B cell (primary cell): ENCODE measurements at regions of chr18 and their contacts with region 1.

Region 1: DNA sequence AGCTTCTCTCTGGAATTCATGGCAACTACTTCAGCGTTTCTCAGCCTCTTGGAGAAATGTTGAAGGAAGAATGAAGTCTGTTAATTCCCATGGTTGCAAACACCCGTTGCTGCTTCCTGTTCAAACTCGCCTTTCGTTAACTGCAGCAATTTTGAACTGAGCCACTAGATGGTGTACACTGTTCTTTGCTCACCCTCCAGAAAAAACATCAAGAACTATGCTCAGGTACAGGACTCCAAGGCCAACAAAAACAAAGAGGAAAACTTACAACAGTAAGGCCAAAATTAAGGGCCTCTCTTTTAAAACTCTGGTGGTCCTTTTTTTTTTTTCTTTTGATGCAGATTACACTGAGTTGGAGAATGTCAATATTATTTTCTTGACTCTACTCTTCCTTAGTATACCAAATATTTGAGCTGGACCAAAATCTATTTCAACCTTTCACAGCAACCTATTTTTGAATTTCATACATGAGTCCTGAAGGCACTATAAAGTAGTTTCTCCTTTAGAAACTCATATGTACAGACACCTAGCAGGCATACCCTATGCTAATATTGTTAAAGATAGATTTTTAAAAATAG is 58.2 kb downstream of the KLHL14 start:
- DNase-seq: peak; percentile 83
- ATAC-seq: peak; percentile 97
- H3K4me3 ChIP-seq: no peak overlapping the region
- H3K4me3 Mint-ChIP-seq: no peak overlapping the region
- H3K27ac ChIP-seq: peak overlapping the region in 1 of 2 donors; percentile 45
- H3K27ac Mint-ChIP-seq: peak overlapping the region; percentile 62
- H3K4me1 ChIP-seq: peaks cover 7 to 9% of the 10 kb centered on the region in 2 donors
- H3K4me1 Mint-ChIP-seq: peaks cover 10% of the 10 kb centered on the region
- H3K27me3 ChIP-seq: no peaks in the 10 kb centered on the region
- H3K27me3 Mint-ChIP-seq: no peaks in the 10 kb centered on the region
- CTCF ChIP-seq: peak; percentile 83

Region 2: GRCh38 chr18:32438173-32438572 is 276.5 kb before region 1 on chr18:
- CTCF ChIA-PET with region 1: no interaction called
- POLR2A ChIA-PET with region 1: no interaction called
- intact Hi-C with region 1: no loop called
- DNase-seq: no peak
- ATAC-seq: no peak
- H3K4me3 ChIP-seq: no peak overlapping the region
- H3K4me3 Mint-ChIP-seq: no peak overlapping the region
- H3K27ac ChIP-seq: no peak overlapping the region
- H3K27ac Mint-ChIP-seq: no peak overlapping the region
- H3K4me1 ChIP-seq: no peaks in the 10 kb centered on the region
- H3K4me1 Mint-ChIP-seq: no peaks in the 10 kb centered on the region
- H3K27me3 ChIP-seq: no peaks in the 10 kb centered on the region
- H3K27me3 Mint-ChIP-seq: peaks cover 20% of the 10 kb centered on the region
- CTCF ChIP-seq: no peak

Region 3: GRCh38 chr18:32730620-32731091 is 16.0 kb after region 1 on chr18:
- CTCF ChIA-PET with region 1: interaction called, 20 read pairs
- POLR2A ChIA-PET with region 1: no interaction called
- intact Hi-C with region 1: loop called (anchors 1 kb)
- DNase-seq: peak; percentile 71
- ATAC-seq: peak; percentile 87
- H3K4me3 ChIP-seq: peak overlapping the region in 3 of 5 experiments; percentile 34 to 51 (median 35)
- H3K4me3 Mint-ChIP-seq: peak overlapping the region; percentile 85
- H3K27ac ChIP-seq: peak overlapping the region; percentile 39 to 60
- H3K27ac Mint-ChIP-seq: peak overlapping the region; percentile 88
- H3K4me1 ChIP-seq: peaks cover 17 to 27% of the 10 kb centered on the region in 2 donors
- H3K4me1 Mint-ChIP-seq: peaks cover 39% of the 10 kb centered on the region
- H3K27me3 ChIP-seq: no peaks in the 10 kb centered on the region
- H3K27me3 Mint-ChIP-seq: no peaks in the 10 kb centered on the region
- CTCF ChIP-seq: no peak

Region 4: DNA sequence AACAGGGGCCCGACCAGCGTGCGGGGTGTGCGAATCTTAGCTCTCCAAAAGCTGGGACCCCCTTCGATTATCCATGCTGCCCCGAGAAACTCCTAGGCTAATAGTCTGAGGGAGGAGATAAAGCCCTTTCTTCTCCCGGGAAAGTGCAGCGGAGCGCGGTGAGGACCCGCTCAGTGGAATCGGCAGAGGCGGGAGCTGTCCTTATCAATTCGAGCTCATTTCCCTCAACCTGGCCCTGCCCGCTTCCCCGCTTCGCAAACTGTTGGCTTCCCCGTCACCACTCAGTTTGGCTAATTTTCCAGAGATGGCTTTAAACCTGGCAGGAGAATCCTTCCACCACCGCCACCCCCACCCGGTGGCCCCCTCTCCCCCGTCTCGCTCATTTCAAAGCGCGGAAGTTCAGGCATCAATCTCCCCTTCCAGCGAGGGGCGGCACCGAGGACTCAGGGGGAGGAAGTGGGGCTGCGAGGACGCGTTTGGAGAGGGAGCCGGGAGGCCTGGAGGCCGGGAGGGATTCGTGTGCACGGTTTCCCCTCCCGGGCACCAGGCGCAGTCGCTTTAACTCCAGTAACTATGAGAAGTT is 56.6 kb after region 1 on chr18:
- CTCF ChIA-PET with region 1: interaction called, 48 read pairs
- POLR2A ChIA-PET with region 1: interaction called, 5 read pairs
- intact Hi-C with region 1: loop called (anchors 2 kb)
- DNase-seq: peak; percentile 56
- ATAC-seq: peak; percentile 26
- H3K4me3 ChIP-seq: peak overlapping the region; percentile 65 to 93 (median 82)
- H3K4me3 Mint-ChIP-seq: peak overlapping the region; percentile 99
- H3K27ac ChIP-seq: peak overlapping the region; percentile 75
- H3K27ac Mint-ChIP-seq: peak overlapping the region; percentile 93
- H3K4me1 ChIP-seq: peaks cover 43 to 48% of the 10 kb centered on the region in 2 donors
- H3K4me1 Mint-ChIP-seq: peaks cover 53% of the 10 kb centered on the region
- H3K27me3 ChIP-seq: no peaks in the 10 kb centered on the region
- H3K27me3 Mint-ChIP-seq: no peaks in the 10 kb centered on the region
- CTCF ChIP-seq: no peak

Region 5: DNA sequence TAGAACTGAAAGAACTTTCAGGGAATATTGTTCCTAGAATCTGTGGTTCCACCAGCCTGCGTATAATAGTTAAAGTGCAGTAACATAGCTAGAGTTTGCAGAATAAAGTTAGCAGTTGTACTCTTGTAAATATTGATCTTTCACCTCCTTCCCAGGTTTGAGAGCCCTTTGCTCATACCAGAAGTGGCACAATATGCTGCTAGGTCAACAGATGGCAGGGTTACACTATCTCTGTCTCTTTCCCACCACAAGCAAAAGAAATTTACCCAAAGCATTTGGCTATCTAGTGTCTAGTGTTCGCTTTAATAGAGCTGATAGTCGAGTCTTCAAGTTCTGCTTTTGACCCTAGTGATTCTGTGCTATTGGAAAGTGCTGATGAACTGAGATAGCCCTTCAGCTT is 177.1 kb after region 1 on chr18:
- CTCF ChIA-PET with region 1: interaction called, 10 read pairs
- POLR2A ChIA-PET with region 1: no interaction called
- intact Hi-C with region 1: no loop called
- DNase-seq: no peak
- ATAC-seq: no peak
- H3K4me3 ChIP-seq: no peak overlapping the region
- H3K4me3 Mint-ChIP-seq: no peak overlapping the region
- H3K27ac ChIP-seq: no peak overlapping the region
- H3K27ac Mint-ChIP-seq: peak overlapping the region; percentile 47
- H3K4me1 ChIP-seq: peaks cover 13 to 19% of the 10 kb centered on the region in 2 donors
- H3K4me1 Mint-ChIP-seq: peaks cover 29% of the 10 kb centered on the region
- H3K27me3 ChIP-seq: no peaks in the 10 kb centered on the region
- H3K27me3 Mint-ChIP-seq: no peaks in the 10 kb centered on the region
- CTCF ChIP-seq: no peak

Region 6: DNA sequence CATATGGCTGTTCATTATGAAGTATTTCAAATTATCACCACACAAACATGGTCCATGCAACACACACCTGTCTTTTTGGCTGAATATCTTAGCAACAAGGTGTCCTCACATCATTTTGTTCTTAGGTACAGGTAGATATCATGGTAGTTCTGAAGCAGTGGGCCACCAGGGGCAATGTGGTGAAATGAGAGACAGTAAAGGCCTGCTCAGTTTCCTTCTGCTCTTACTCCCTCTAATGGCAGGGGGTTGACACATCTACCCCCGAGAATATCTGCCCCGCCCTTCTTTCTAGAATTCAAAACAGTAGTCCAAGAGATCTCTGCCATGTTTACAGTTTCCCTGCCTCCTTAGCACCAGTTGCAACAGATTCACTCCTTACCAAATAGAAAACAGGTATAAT is 205.1 kb after region 1 on chr18:
- CTCF ChIA-PET with region 1: interaction called, 69 read pairs
- POLR2A ChIA-PET with region 1: interaction called, 3 read pairs
- intact Hi-C with region 1: loop called (anchors 1 kb)
- DNase-seq: peak; percentile 87
- ATAC-seq: peak; percentile 99
- H3K4me3 ChIP-seq: no peak overlapping the region
- H3K4me3 Mint-ChIP-seq: peak overlapping the region; percentile 49
- H3K27ac ChIP-seq: peak overlapping the region in 1 of 2 donors; percentile 24
- H3K27ac Mint-ChIP-seq: no peak overlapping the region
- H3K4me1 ChIP-seq: peaks cover 43 to 52% of the 10 kb centered on the region in 2 donors
- H3K4me1 Mint-ChIP-seq: peaks cover 44% of the 10 kb centered on the region
- H3K27me3 ChIP-seq: no peaks in the 10 kb centered on the region
- H3K27me3 Mint-ChIP-seq: no peaks in the 10 kb centered on the region
- CTCF ChIP-seq: peak; percentile 97

Region 7: DNA sequence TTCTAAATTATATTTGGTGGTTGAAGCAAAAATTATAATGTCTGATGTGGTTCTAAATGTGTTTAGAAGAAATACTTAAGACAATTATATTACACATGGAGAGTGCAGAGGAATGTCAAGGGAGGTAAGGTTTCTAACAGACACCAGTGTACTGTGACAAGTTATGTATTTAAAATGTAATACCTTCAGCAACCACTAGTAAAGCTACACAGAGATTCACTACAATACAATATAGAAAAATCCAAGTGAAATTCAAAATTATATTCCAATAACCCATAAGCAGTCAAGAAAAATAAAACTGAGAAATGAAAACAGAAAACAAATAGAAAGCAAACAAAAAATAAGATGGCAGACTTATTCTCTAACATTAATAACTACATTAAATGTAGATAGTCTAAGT is 307.7 kb after region 1 on chr18:
- CTCF ChIA-PET with region 1: no interaction called
- POLR2A ChIA-PET with region 1: no interaction called
- intact Hi-C with region 1: loop called (anchors 10 kb)
- DNase-seq: no peak
- ATAC-seq: no peak
- H3K4me3 ChIP-seq: no peak overlapping the region
- H3K4me3 Mint-ChIP-seq: no peak overlapping the region
- H3K27ac ChIP-seq: no peak overlapping the region
- H3K27ac Mint-ChIP-seq: no peak overlapping the region
- H3K4me1 ChIP-seq: no peaks in the 10 kb centered on the region
- H3K4me1 Mint-ChIP-seq: no peaks in the 10 kb centered on the region
- H3K27me3 ChIP-seq: no peaks in the 10 kb centered on the region
- H3K27me3 Mint-ChIP-seq: peaks cover 8% of the 10 kb centered on the region
- CTCF ChIP-seq: peak; percentile 12